Gastrocnemius medialis (tissue), 4 donors: ENCODE measurements at regions of chr6 and their contacts with region 1.

Region 1: DNA sequence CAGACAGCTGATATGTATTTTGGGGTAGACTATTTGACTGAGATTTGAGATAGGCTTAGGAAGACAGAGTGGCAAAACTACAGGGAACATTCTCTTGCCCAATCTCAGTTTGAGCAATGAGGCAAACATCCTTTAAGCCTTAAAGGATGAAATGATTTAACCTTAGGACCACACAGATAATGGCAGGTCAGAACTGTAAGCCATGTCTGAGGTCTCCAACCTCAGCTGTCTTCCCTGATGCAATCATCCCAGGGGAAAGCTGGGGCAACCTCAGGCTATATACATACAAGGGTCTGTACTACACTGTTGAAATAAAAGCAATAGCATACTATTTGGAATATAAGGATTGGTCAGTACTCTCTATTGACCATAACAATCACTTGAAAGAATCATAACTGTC is 83.8 kb upstream of the NUP153 start:
- DNase-seq: no peak
- ATAC-seq: peak in 1 of 2 donors; percentile 36
- H3K4me3 ChIP-seq: no peak overlapping the region
- H3K27ac ChIP-seq: no peak overlapping the region
- H3K4me1 ChIP-seq: no peaks in the 10 kb centered on the region
- H3K27me3 ChIP-seq: no peaks in the 10 kb centered on the region
- CTCF ChIP-seq: no peak
- POLR2A ChIP-seq: no peak

Region 2: DNA sequence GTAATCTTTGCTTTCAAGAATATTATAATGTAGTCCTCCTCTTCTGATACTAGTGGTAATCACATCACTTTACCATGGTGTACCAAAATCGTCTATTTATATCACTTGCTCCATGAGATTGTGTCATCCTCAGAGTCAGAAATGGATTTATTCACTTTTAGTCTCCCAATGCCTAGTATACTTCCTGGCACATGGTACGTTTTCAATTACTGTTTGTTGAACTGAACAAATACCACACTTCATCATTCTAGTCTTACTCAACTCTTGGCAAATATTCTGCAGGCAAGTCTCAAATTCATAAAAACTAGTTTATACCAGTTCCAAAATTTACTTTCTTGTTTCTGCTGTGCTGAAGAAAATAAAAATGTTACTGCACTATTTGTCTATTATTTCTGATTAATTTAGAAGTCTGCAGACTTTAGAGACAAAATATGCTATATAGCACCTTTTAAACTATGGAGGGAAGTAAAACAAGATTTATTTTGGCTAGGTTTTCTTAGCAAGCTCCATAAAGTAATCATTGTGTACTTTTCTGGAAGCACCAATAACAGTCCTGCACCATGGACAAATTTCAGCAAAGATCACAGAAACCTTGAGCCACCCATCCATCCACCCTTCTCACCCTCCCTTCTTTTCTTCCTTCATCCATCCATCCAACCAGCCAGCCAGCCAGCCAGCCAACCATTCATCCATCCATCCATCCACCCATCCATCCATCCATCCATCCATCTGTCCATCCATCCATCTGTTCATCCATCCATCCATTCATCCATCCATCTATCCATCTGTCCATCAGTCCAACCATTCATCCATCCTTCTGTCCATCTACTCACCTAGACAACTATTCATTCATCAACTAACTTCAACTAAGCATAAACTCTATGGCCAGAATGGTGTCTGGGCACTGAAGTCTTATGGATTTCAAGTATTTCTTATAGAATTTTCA is 790.7 kb before region 1 on chr6:
- in situ Hi-C with region 1: no loop called
- intact Hi-C with region 1: no loop called
- DNase-seq: no peak
- ATAC-seq: peak in 1 of 2 donors; percentile 23
- H3K4me3 ChIP-seq: no peak overlapping the region
- H3K27ac ChIP-seq: no peak overlapping the region
- H3K4me1 ChIP-seq: no peaks in the 10 kb centered on the region
- H3K27me3 ChIP-seq: no peaks in the 10 kb centered on the region
- CTCF ChIP-seq: no peak
- POLR2A ChIP-seq: no peak

Region 3: GRCh38 chr6:17599885-17600526 is 190.5 kb before region 1 on chr6 and contains the start of gene FAM8A1:
- in situ Hi-C with region 1: loop called in 1 of 4 experiments (anchors 25 kb)
- intact Hi-C with region 1: no loop called
- DNase-seq: peak; percentile 95 to 97
- ATAC-seq: peak; percentile 93 to 96
- H3K4me3 ChIP-seq: peak within 1 kb of the TSS; percentile 77 to 98 (median 86)
- H3K27ac ChIP-seq: peak within 1 kb of the TSS; percentile 89 to 99 (median 94)
- H3K4me1 ChIP-seq: peaks cover 11 to 13% of the 10 kb centered on the region in 2 donors
- H3K27me3 ChIP-seq: no peaks in the 10 kb centered on the region
- CTCF ChIP-seq: peak; percentile 60 to 75 (median 69)
- POLR2A ChIP-seq: peak; percentile 84 to 85
- total RNA-seq, gene FAM8A1: 22.7 to 37.3 (median 27.5) TPM

Region 4: DNA sequence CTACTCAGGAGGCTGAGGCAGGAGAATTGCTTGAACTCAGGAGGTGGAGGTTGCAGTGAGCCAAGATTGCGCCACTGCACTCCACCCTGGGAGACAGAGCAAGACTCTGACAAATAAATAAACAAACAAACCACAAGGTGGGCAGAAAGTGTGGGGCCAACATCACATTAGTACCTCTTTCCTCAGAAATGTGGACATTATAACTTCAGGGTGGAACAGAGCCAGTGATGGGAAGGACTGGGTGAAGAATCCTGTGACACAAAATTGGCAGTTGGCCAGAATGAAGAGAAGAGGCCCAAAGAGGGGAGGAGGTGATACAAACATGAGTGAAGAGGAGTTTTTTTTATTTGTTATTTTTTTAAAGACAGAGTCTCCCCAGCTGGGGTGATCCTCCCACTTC is 134.4 kb before region 1 on chr6:
- in situ Hi-C with region 1: loop called in 1 of 4 experiments (anchors 25 kb)
- intact Hi-C with region 1: no loop called
- DNase-seq: no peak
- ATAC-seq: no peak
- H3K4me3 ChIP-seq: no peak overlapping the region
- H3K27ac ChIP-seq: no peak overlapping the region
- H3K4me1 ChIP-seq: no peaks in the 10 kb centered on the region
- H3K27me3 ChIP-seq: no peaks in the 10 kb centered on the region
- CTCF ChIP-seq: no peak
- POLR2A ChIP-seq: no peak